ENCODE measurements at regions of chr7 and their contacts with region 1.

Region 1: GRCh38 chr7:33109005-33109757 is at the start of gene RP9:
- DNase-seq: peak; percentile 93
- H3K4me3 Mint-ChIP-seq: peak within 1 kb of the TSS; percentile 88
- H3K27ac Mint-ChIP-seq: peak within 1 kb of the TSS; percentile 43
- H3K4me1 Mint-ChIP-seq: peaks cover 14% of the 10 kb centered on the region
- H3K27me3 Mint-ChIP-seq: peaks cover 39% of the 10 kb centered on the region
- CTCF ChIP-seq: peak; percentile 65
- total RNA-seq, gene RP9: 30.9 and 37.2 TPM in 2 replicates

Region 2: GRCh38 chr7:32694182-32694581 is 415.0 kb before region 1 on chr7:
- CTCF ChIA-PET with region 1: interaction called, 3 read pairs
- intact Hi-C with region 1: loop called (anchors 2 kb)
- DNase-seq: no peak
- H3K4me3 Mint-ChIP-seq: no peak overlapping the region
- H3K27ac Mint-ChIP-seq: no peak overlapping the region
- H3K4me1 Mint-ChIP-seq: peaks cover 22% of the 10 kb centered on the region
- H3K27me3 Mint-ChIP-seq: no peaks in the 10 kb centered on the region
- CTCF ChIP-seq: no peak

Region 3: GRCh38 chr7:32803406-32804141 is 305.6 kb before region 1 on chr7:
- CTCF ChIA-PET with region 1: no interaction called
- intact Hi-C with region 1: loop called (anchors 2 kb)
- DNase-seq: no peak
- H3K4me3 Mint-ChIP-seq: no peak overlapping the region
- H3K27ac Mint-ChIP-seq: no peak overlapping the region
- H3K4me1 Mint-ChIP-seq: no peaks in the 10 kb centered on the region
- H3K27me3 Mint-ChIP-seq: no peaks in the 10 kb centered on the region
- CTCF ChIP-seq: no peak

Region 4: DNA sequence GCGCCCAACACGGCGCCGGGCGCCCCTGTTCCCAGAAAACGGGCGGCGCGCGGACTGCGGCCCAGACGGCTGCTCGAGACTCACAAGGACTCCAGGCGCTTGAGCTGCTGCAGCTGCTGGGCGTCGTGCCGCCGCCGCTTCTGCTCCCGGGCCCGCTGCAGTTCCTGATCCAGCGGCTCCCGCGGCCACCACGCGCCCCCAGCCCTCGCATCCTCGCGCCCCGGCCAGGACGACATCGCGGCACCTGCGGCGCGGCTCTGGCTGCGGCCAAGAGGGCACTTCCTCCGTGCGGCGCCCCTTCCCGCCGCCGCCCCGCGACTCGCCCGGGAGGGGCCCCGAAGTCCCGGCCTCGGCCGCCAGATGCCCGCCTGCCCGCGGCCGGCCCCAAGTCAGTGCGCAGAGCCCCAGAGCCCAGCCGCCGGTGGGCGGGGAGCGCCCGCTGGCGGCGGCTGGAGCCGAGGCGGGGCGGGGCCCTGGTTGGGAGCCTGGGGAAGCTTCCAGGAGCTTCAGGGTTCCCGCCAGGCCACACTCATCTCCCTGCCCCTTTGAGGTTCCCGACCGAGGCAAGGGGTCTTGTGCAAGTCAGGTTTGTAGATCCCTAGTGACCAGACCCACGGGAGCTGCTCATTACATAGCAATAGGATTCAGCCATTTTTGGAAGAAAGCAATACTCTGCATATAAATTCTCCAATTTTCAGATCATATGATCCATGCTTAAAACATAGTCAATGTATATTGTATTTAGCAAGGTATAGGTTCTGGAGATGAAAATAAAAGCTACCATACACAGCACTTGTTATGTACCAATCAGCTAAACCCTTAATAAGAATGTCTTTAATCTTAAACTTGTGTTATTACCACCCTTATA is 166.2 kb before region 1 on chr7:
- CTCF ChIA-PET with region 1: no interaction called
- intact Hi-C with region 1: loop called (anchors 5 kb)
- DNase-seq: peak; percentile 94
- H3K4me3 Mint-ChIP-seq: peak overlapping the region; percentile 91
- H3K27ac Mint-ChIP-seq: no peak overlapping the region
- H3K4me1 Mint-ChIP-seq: peaks cover 22% of the 10 kb centered on the region
- H3K27me3 Mint-ChIP-seq: no peaks in the 10 kb centered on the region
- CTCF ChIP-seq: peak; percentile 68

Region 5: GRCh38 chr7:33024189-33024757 is 84.9 kb before region 1 on chr7:
- CTCF ChIA-PET with region 1: no interaction called
- intact Hi-C with region 1: no loop called
- DNase-seq: no peak
- H3K4me3 Mint-ChIP-seq: no peak overlapping the region
- H3K27ac Mint-ChIP-seq: no peak overlapping the region
- H3K4me1 Mint-ChIP-seq: no peaks in the 10 kb centered on the region
- H3K27me3 Mint-ChIP-seq: no peaks in the 10 kb centered on the region
- CTCF ChIP-seq: no peak

Region 6: GRCh38 chr7:33062782-33063443 is 46.3 kb before region 1 on chr7:
- CTCF ChIA-PET with region 1: interaction called, 14 read pairs
- intact Hi-C with region 1: loop called (anchors 2 kb)
- DNase-seq: peak; percentile 98
- H3K4me3 Mint-ChIP-seq: peak overlapping the region; percentile 93
- H3K27ac Mint-ChIP-seq: peak overlapping the region; percentile 61
- H3K4me1 Mint-ChIP-seq: peaks cover 28% of the 10 kb centered on the region
- H3K27me3 Mint-ChIP-seq: no peaks in the 10 kb centered on the region
- CTCF ChIP-seq: no peak

Region 7: DNA sequence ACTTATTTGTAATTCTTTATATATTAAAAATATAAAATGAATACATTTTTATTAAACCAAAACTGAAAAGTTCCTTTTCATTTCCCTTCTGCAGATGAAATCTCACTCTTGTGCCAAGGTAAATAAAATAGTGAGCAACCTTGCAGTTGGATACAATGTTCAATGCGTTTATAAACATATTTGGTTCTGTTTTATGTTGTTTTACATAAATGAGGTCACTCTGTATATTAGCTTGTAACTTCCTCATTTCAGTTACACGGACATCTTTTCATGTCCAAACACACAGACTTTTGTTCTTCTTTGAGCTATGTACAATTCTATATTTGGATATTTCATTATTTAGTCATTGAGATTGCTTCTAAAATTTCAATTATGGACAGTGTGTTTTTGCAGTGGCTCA is 127.9 kb after region 1 on chr7:
- CTCF ChIA-PET with region 1: no interaction called
- intact Hi-C with region 1: no loop called
- DNase-seq: no peak
- H3K4me3 Mint-ChIP-seq: no peak overlapping the region
- H3K27ac Mint-ChIP-seq: no peak overlapping the region
- H3K4me1 Mint-ChIP-seq: no peaks in the 10 kb centered on the region
- H3K27me3 Mint-ChIP-seq: no peaks in the 10 kb centered on the region
- CTCF ChIP-seq: no peak